K562 (cell line): ENCODE measurements at regions of chr5 and their contacts with region 1.

Region 1: DNA sequence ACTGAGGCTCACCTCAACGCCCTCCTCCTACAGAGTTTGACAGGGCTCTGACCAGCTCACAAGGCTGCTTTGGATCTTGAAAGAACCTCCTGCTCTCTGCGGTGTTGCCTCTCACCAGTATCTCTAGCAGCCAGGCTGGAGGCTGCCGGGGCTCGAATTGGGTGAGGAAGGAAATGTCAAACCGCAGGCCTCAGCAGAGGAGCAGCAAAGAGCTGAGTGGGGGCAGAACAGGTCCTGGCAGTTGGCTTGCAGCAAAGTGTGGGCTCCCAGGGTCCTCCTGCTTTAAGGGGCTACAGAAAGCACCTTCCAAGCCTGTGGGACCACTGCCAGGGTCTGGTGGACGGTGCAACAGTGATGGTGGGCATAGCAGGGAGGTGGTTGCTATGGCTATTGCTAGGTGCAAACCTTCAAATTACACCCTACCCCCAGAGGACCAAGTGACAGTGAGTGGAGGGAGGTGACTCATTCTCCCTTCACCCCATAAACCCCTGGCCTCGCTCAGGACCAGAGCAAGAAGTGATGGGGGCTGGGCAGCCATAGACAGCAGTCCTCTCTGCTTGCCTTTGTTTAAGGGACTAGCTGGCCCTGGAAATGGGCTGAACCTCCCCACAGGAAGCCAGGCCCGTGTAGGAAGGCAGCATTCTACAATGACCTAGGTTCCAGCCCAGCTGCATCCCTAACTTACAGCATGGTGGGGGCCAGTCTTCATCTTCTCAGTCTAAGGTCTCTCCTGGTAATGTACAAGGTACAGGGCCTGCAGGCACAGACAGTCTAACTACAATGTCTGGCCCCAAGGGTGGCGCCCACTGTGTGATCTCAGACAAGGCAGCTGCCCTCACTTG is 18.7 kb downstream of the LCP2 start:
- DNase-seq: peak; percentile 61 to 87 (median 66)
- ATAC-seq: peak; percentile 78
- H3K4me3 ChIP-seq: peak overlapping the region; percentile 16; the same call in 1 of the 2 replicates
- H3K27ac ChIP-seq: peak overlapping the region; percentile 60
- H3K4me1 ChIP-seq: peaks cover 8 to 38% of the 10 kb centered on the region in 2 experiments
- H3K27me3 ChIP-seq: no peaks in the 10 kb centered on the region
- CTCF ChIP-seq: no peak
- EP300 ChIP-seq: peak; percentile 49; the same call in 1 of the 2 replicates
- POLR2A ChIP-seq: no peak
- RAD21 ChIP-seq: no peak

Region 2: GRCh38 chr5:170306381-170306831 is 27.6 kb after region 1 on chr5:
- CTCF ChIA-PET with region 1: no interaction called
- POLR2A ChIA-PET with region 1: interaction called, 3 read pairs
- in situ Hi-C with region 1: no loop called
- intact Hi-C with region 1: loop called (anchors 2 kb)
- DNase-seq: peak; percentile 70 to 86 (median 78)
- ATAC-seq: peak; percentile 76
- H3K4me3 ChIP-seq: no peak overlapping the region
- H3K27ac ChIP-seq: peak overlapping the region; percentile 65
- H3K4me1 ChIP-seq: peaks cover 5 to 63% of the 10 kb centered on the region in 2 experiments
- H3K27me3 ChIP-seq: no peaks in the 10 kb centered on the region
- CTCF ChIP-seq: no peak
- EP300 ChIP-seq: peak; percentile 90
- POLR2A ChIP-seq: no peak; the same call in 1 of the 2 replicates
- RAD21 ChIP-seq: peak in 1 of 2 experiments; percentile 29; a peak in 1 of 4 replicates

Region 3: DNA sequence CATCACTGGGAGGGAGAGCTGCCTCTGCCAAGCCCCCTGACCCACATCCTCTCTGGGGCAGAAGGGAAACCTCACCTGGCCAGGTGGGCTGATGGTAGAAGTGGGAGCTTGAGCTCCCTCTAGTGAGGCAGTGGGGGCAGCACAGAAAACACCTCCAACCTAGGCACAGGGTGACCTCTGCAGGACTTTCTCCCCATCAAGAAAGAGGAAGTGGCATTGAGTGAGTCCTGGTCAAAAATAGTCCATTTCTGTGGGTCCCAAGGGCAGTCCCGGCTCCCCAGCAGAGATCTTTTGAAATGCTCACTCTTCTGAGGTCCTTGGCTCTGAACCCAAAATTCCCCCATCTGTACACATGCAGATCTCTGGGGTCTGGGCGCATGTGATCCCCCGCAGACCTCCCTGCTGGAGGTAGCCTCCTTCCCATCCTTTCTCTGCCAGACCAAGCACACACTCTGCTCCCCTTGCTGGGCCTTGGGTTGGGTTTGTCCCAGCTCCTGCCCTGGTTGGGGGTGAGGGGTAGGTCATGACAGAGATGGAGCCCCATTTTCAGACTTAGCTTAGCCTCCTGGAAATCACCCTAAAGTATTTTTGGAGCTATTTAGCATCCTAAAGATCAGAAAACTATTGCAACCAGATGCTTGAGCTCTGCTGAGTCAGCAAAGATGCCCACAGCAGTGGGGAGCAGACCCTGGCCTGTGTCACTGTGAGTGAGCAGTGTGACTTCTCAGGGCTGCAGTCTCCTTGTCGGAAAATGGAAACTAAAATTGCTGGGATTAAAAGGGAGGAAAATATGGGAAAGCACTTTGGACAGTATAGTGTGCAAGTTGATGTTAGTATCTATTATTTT is 60.3 kb after region 1 on chr5:
- CTCF ChIA-PET with region 1: interaction called, 10 read pairs
- POLR2A ChIA-PET with region 1: interaction called, 3 read pairs
- in situ Hi-C with region 1: no loop called
- intact Hi-C with region 1: loop called (anchors 1 kb)
- DNase-seq: peak; percentile 46 to 77 (median 60)
- ATAC-seq: peak; percentile 89
- H3K4me3 ChIP-seq: no peak overlapping the region
- H3K27ac ChIP-seq: no peak overlapping the region
- H3K4me1 ChIP-seq: peaks cover 0 to 9% of the 10 kb centered on the region in 2 experiments; a peak in 3 of 5 replicates
- H3K27me3 ChIP-seq: no peaks in the 10 kb centered on the region; a peak in 3 of 5 replicates
- CTCF ChIP-seq: peak; percentile 95 to 100 (median 99)
- EP300 ChIP-seq: no peak
- POLR2A ChIP-seq: no peak
- RAD21 ChIP-seq: peak; percentile 98 to 100

Region 4: GRCh38 chr5:170420780-170421412 is 142.1 kb after region 1 on chr5:
- CTCF ChIA-PET with region 1: no interaction called
- POLR2A ChIA-PET with region 1: no interaction called
- in situ Hi-C with region 1: no loop called
- intact Hi-C with region 1: loop called (anchors 2 kb)
- DNase-seq: peak; percentile 70 to 72 (median 72)
- ATAC-seq: peak; percentile 89
- H3K4me3 ChIP-seq: no peak overlapping the region
- H3K27ac ChIP-seq: no peak overlapping the region
- H3K4me1 ChIP-seq: no peaks in the 10 kb centered on the region
- H3K27me3 ChIP-seq: peaks cover 0 to 11% of the 10 kb centered on the region in 2 experiments; a peak in 2 of 5 replicates
- CTCF ChIP-seq: peak; percentile 65 to 74 (median 73)
- EP300 ChIP-seq: no peak
- POLR2A ChIP-seq: no peak
- RAD21 ChIP-seq: peak; percentile 66 to 79